Heart left ventricle (tissue), 16 donors: ENCODE measurements at regions of chr13 and their contacts with region 1.

Region 1: GRCh38 chr13:97802213-97802612 is 151.3 kb upstream of the IPO5 start:
- DNase-seq: no peak
- ATAC-seq: no peak
- H3K4me3 ChIP-seq: no peak overlapping the region
- H3K27ac ChIP-seq: no peak overlapping the region
- H3K4me1 ChIP-seq: no peaks in the 10 kb centered on the region
- H3K27me3 ChIP-seq: no peaks in the 10 kb centered on the region
- CTCF ChIP-seq: no peak
- POLR2A ChIP-seq: no peak

Region 2: GRCh38 chr13:97753942-97754670 is 48.1 kb before region 1 on chr13:
- intact Hi-C with region 1: loop called in 1 of 10 experiments (anchors 5 kb)
- DNase-seq: no peak
- ATAC-seq: no peak
- H3K4me3 ChIP-seq: no peak overlapping the region
- H3K27ac ChIP-seq: no peak overlapping the region
- H3K4me1 ChIP-seq: peaks cover 0 to 7% (median 0%) of the 10 kb centered on the region in 12 donors
- H3K27me3 ChIP-seq: peaks cover 0 to 3% (median 0%) of the 10 kb centered on the region in 9 donors
- CTCF ChIP-seq: no peak
- POLR2A ChIP-seq: no peak

Region 3: DNA sequence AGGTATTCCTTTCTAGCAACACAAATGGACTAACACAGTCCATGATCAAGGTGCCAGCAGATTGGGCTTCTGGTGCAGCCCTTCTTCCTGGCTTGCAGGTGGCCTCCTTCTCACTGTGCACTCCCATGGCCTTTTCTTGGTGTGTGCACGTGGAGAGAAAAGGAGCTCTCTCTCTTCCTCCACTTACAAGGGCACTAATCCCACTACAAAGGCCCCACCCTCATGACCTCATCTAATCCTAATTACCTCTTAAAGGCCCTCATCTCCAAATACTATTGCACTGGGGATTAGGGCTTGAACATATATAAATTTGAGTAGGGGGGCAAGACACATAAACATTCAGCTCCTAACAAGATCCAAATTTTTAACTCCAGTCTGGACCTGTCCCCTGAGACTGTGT is 321.0 kb after region 1 on chr13:
- intact Hi-C with region 1: no loop called
- DNase-seq: no peak
- ATAC-seq: no peak
- H3K4me3 ChIP-seq: no peak overlapping the region
- H3K27ac ChIP-seq: no peak overlapping the region
- H3K4me1 ChIP-seq: no peaks in the 10 kb centered on the region
- H3K27me3 ChIP-seq: no peaks in the 10 kb centered on the region
- CTCF ChIP-seq: no peak
- POLR2A ChIP-seq: no peak

Region 4: DNA sequence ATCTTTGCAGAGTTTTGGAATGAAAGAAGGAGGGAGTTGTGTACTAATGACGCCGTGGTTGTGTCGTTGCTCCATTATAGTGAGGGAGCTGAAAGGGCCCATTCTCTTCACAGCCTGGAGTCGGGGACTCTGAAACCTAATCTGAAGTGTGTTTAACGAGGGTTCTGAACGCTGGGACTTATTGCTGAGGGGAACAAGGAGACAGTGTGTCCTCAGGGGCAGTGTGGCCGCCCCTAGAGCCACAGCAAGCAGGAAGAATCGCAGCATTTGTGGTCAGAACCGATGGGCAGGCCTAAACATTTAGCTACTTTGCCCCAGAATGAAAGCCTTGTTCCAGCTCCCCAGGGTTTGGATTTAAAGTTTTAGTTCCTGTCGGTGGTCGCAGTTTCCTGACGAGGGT is 531.3 kb after region 1 on chr13:
- intact Hi-C with region 1: no loop called
- DNase-seq: no peak
- ATAC-seq: no peak
- H3K4me3 ChIP-seq: no peak overlapping the region
- H3K27ac ChIP-seq: no peak overlapping the region
- H3K4me1 ChIP-seq: no peaks in the 10 kb centered on the region
- H3K27me3 ChIP-seq: no peaks in the 10 kb centered on the region
- CTCF ChIP-seq: no peak
- POLR2A ChIP-seq: no peak